GM10248 (cell line): ENCODE measurements at regions of chr3 and their contacts with region 1.

Region 1: GRCh38 chr3:81490541-81491288 is 270.7 kb downstream of the GBE1 start:
- DNase-seq: peak; percentile 31
- CTCF ChIP-seq: peak; percentile 59

Region 2: GRCh38 chr3:81476692-81477091 is 14.0 kb before region 1 on chr3:
- CTCF ChIA-PET with region 1: interaction called, 10 read pairs
- POLR2A ChIA-PET with region 1: no interaction called
- DNase-seq: no peak
- CTCF ChIP-seq: no peak

Region 3: GRCh38 chr3:82927309-82928253 is 1436.9 kb after region 1 on chr3:
- CTCF ChIA-PET with region 1: no interaction called
- POLR2A ChIA-PET with region 1: no interaction called
- DNase-seq: no peak
- CTCF ChIP-seq: no peak